Common myeloid progenitor, CD34-positive (primary cell): ENCODE measurements at regions of chr12 and their contacts with region 1.

Region 1: GRCh38 chr12:55797068-55797467 is 20.5 kb downstream of the SARNP start:
- DNase-seq: peak; percentile 56 to 70 (median 64)
- H3K4me3 ChIP-seq: no peak overlapping the region
- H3K27ac ChIP-seq: no peak overlapping the region
- H3K4me1 ChIP-seq: no peaks in the 10 kb centered on the region
- H3K27me3 ChIP-seq: no peaks in the 10 kb centered on the region

Region 2: DNA sequence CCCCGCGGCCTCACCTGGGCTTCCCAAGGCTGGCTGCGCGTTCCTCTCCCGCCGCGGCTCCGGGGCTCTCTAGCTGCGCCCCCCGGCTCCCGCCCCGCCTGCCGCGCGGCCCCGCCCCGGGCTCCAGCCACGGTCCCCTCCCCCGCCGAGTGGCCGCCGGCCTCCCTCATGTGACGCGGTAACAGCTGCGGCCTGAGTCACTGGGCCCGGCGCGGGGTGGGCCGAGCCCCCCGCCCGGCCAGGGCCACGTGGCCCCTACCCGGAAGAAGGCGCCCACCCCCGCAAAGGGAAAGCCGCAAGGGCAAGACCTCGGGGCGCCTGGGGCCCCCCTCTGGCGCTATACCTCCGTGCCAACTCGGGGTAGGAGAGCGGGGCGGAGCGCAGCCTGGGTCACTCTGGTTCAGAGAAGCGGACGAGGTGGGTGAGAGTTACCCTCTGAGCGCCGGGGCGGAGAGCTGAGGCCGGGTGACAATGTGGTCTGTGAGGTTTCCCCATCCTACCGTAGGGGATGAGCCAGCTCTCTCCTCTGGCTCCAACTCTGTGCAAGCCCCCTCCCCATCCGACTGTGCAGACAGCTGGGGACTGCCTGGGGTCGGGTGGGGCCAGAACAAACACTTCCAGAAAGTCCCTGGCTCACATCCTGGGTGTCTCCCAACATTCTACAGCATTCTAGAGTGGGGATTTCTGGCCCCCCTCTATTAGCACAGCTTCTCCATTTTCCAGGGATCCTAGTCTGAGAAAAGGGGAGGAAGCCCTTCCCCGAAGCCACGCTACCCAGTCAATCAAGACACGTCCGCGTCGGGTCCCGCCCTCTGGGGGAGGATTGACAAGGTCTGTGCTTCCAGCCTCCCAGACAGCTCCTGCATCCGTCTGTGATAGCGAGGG is 67.9 kb before region 1 on chr12 and contains the start of gene CD63:
- CTCF ChIA-PET with region 1: interaction called, 16 read pairs
- POLR2A ChIA-PET with region 1: interaction called, 4 read pairs
- DNase-seq: peak; percentile 77 to 91 (median 88)
- H3K4me3 ChIP-seq: peak within 1 kb of the TSS; percentile 57 to 88 (median 71)
- H3K27ac ChIP-seq: peak within 1 kb of the TSS; percentile 66 to 86
- H3K4me1 ChIP-seq: peaks cover 12 to 46% (median 34%) of the 10 kb centered on the region in 4 experiments
- H3K27me3 ChIP-seq: no peaks in the 10 kb centered on the region

Region 3: GRCh38 chr12:55780685-55781084 is 16.4 kb before region 1 on chr12:
- CTCF ChIA-PET with region 1: interaction called, 22 read pairs
- POLR2A ChIA-PET with region 1: no interaction called
- DNase-seq: peak; percentile 35 to 76 (median 75)
- H3K4me3 ChIP-seq: no peak overlapping the region
- H3K27ac ChIP-seq: peak overlapping the region; percentile 16 to 30
- H3K4me1 ChIP-seq: peaks cover 0 to 13% (median 0%) of the 10 kb centered on the region in 4 experiments
- H3K27me3 ChIP-seq: no peaks in the 10 kb centered on the region

Region 4: DNA sequence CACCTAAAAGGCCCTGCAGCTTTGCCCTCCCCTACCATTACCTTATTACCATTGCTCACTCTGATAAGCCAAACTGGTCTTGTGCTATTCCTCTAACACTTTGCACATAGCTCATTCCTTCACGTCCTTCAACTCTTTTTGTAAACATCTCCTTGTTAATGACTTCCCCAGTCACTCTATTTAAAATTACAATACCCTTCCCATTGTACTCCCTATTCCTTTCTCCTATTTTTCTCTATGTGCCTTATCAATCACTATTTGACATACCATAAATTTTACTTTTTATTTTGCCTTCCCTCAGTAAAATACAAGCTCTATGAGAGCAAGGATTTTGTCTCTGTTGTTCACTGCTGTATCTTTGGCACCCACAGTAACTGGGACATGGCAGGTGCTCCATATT is 15.0 kb after region 1 on chr12:
- CTCF ChIA-PET with region 1: interaction called, 14 read pairs
- POLR2A ChIA-PET with region 1: no interaction called
- DNase-seq: no peak
- H3K4me3 ChIP-seq: no peak overlapping the region
- H3K27ac ChIP-seq: no peak overlapping the region
- H3K4me1 ChIP-seq: peaks cover 7 to 18% (median 9%) of the 10 kb centered on the region in 4 experiments
- H3K27me3 ChIP-seq: no peaks in the 10 kb centered on the region